GM10248 (cell line): ENCODE measurements at regions of chr4 and their contacts with region 1.

Region 1: GRCh38 chr4:152500800-152501434 is 35.0 kb downstream of the FBXW7 start:
- DNase-seq: peak; percentile 46
- CTCF ChIP-seq: peak; percentile 83

Region 2: GRCh38 chr4:152476796-152477195 is 24.1 kb before region 1 on chr4:
- CTCF ChIA-PET with region 1: interaction called, 16 read pairs
- POLR2A ChIA-PET with region 1: no interaction called
- DNase-seq: no peak
- CTCF ChIP-seq: no peak

Region 3: GRCh38 chr4:152525873-152526272 is 25.0 kb after region 1 on chr4:
- CTCF ChIA-PET with region 1: interaction called, 28 read pairs
- POLR2A ChIA-PET with region 1: no interaction called
- DNase-seq: no peak
- CTCF ChIP-seq: no peak

Region 4: DNA sequence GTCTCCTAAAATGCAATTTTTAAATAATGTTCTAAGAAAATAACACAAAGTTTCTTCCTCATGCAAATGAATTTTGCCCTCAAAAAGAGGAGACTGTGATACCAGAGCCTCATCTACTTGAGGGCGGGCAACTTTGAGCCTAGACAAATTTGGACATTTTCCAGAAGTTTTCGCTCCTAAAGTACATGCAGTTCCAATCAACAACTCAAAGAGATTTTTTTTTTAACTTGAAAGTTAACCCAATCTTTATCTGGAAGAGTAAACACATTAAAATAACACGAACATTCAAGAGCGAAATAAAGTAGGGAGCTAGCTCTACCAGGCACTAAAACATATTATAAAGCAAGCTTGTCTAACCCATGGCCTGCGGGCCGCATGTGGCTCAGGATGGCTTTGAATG is 64.4 kb after region 1 on chr4:
- CTCF ChIA-PET with region 1: interaction called, 13 read pairs
- POLR2A ChIA-PET with region 1: no interaction called
- DNase-seq: no peak
- CTCF ChIP-seq: no peak

Region 5: DNA sequence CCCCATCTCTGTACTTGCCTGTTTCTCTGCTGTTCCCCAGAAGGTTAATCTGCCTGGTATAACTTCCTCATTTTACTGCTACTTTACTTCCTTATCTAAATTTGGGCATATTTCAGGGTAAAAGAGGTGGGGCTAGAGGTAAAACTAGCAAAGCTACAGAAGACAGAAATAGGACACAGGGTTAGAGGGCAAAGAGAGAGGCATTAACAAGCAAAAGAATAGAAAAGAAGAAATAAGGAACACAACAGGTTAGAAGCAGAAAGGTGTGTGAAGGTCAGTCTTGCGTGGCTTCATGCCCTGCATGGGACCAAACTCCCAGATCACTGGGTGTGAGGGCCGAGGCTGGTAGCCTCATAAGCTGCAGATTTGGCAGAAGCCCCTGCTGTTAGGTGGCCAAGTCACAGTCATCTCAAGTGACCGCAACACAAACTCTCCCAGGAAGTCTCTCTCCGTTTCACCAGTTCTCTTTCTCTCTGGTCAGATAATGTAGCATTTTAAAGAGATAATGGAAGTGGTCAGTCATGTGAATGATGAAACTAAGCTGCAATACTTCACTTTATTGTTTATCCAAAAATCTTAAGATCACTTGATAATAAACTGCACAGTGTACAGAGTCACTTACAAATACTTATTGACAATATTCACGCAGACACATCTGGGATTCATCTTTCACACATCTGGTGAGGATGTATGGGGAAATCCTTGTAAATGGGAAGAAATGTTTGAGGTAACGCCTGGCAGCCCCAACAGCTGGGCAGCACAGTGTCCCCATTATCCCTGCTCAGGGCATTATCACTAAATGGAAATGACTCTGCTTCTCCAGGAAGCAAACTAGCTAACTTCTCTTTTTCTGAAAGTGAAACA is 162.5 kb after region 1 on chr4:
- CTCF ChIA-PET with region 1: interaction called, 11 read pairs
- POLR2A ChIA-PET with region 1: no interaction called
- DNase-seq: peak; percentile 53
- CTCF ChIP-seq: no peak